ENCODE measurements at regions of chr13 and their contacts with region 1.

Region 1: GRCh38 chr13:102724923-102725322 is 30.1 kb upstream of the METTL21C start:
- H3K4me3 ChIP-seq: no peak overlapping the region
- H3K27ac ChIP-seq: no peak overlapping the region
- H3K4me1 ChIP-seq: no peaks in the 10 kb centered on the region
- CTCF ChIP-seq: no peak

Region 2: DNA sequence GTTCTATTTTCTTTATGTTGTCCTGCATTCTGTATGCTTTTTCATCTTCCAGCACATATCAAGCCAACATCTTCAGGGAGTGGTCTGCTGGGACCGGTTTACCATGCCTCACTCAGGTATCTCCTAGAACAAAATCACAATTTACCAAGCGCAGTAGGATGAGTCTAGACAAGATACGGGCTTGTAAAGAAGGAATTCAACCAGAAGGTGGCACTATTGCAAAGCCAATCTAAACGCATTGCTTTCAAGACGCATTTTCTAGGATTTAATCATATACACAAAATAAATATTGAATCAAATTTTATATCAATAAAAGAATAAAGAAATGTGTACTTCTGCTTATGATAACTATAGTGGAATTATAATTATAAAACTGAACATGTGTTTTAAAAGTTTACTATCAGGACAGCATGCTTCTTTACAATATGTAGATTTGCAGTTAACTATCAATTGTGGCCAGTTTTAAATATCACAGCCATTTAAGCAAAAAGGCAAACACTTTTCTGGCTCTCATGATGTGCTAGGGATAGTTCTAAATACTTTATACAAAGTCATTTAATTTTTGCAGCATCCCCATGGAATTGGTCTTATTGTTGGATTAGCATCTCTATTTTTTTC is 144.3 kb before region 1 on chr13:
- CTCF ChIA-PET with region 1: interaction called, 28 read pairs
- POLR2A ChIA-PET with region 1: no interaction called
- H3K4me3 ChIP-seq: no peak overlapping the region
- H3K27ac ChIP-seq: no peak overlapping the region
- H3K4me1 ChIP-seq: no peaks in the 10 kb centered on the region
- CTCF ChIP-seq: no peak

Region 3: DNA sequence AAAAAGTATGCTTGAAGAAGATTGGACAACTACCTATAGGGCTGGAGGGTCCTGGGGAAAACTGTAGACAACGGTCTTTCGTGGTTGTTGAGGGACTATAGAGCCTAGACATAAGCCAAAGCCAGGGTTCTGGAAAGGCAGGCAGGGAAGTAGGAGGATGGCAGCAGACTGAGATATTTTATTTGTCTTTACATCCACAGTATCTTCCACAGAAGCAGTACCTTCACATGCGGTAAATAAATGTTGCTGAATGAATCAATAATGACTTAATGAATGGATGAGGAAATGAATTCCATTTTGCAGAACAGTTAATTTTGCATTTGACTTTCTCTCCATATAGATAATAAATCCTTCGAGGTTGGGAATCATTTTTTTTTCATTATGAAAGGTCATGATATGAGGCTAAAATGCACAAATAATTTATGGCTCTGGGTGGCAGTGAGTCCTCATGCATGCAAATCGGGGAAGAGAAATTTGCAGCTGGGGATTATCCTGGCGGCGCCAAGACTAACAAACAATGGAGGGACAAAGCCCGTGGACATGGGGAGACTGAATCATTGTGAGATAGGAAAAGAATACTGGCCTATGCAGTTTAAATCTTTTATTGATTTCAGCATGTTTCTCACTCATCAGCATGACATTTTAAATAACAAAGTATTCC is 223.0 kb after region 1 on chr13:
- CTCF ChIA-PET with region 1: no interaction called
- POLR2A ChIA-PET with region 1: no interaction called
- H3K4me3 ChIP-seq: no peak overlapping the region
- H3K27ac ChIP-seq: no peak overlapping the region
- H3K4me1 ChIP-seq: no peaks in the 10 kb centered on the region
- CTCF ChIP-seq: no peak

Region 4: GRCh38 chr13:102960959-102961358 is 236.0 kb after region 1 on chr13:
- CTCF ChIA-PET with region 1: no interaction called
- POLR2A ChIA-PET with region 1: no interaction called
- H3K4me3 ChIP-seq: no peak overlapping the region
- H3K27ac ChIP-seq: no peak overlapping the region
- H3K4me1 ChIP-seq: no peaks in the 10 kb centered on the region
- CTCF ChIP-seq: no peak